GM18951 (cell line): ENCODE measurements at regions of chr6 and their contacts with region 1.

Region 1: GRCh38 chr6:56292505-56293181 is 45.3 kb upstream of the COL21A1 start:
- POLR2A ChIP-seq: no peak

Region 2: GRCh38 chr6:55980627-55981211 is 311.9 kb before region 1 on chr6:
- in situ Hi-C with region 1: loop called (anchors 10 kb)
- POLR2A ChIP-seq: no peak

Region 3: GRCh38 chr6:56440551-56440981 is 147.9 kb after region 1 on chr6:
- in situ Hi-C with region 1: no loop called
- POLR2A ChIP-seq: no peak

Region 4: DNA sequence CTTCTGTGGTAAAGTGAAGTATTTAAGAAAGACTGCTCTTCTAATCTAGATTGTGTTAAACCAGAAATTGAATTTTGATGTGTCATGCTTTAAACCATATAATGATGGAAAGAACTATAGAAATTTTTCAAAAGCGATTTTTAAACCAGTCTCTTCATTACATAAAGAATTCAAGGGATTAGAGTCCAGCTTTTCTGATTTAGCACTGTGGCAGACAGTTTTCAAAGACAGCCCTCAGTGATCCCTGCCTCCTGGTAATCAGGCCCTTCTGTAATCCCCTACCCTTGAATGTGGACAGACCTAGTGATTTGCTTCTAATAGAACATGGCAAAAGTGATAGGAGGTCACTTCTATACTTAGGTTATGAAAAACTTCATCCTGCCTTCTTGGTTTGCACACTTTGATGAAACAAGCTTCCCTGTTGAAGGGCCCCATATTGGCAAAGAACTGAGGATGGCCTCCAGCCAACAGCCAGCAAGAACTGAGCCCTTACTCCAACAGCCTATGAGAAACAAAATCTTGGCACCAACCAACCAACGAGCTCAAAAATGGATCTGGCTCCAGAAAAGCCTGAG is 158.6 kb after region 1 on chr6:
- in situ Hi-C with region 1: no loop called
- POLR2A ChIP-seq: no peak